ENCODE measurements at regions of chr15 and their contacts with region 1.

Region 1: DNA sequence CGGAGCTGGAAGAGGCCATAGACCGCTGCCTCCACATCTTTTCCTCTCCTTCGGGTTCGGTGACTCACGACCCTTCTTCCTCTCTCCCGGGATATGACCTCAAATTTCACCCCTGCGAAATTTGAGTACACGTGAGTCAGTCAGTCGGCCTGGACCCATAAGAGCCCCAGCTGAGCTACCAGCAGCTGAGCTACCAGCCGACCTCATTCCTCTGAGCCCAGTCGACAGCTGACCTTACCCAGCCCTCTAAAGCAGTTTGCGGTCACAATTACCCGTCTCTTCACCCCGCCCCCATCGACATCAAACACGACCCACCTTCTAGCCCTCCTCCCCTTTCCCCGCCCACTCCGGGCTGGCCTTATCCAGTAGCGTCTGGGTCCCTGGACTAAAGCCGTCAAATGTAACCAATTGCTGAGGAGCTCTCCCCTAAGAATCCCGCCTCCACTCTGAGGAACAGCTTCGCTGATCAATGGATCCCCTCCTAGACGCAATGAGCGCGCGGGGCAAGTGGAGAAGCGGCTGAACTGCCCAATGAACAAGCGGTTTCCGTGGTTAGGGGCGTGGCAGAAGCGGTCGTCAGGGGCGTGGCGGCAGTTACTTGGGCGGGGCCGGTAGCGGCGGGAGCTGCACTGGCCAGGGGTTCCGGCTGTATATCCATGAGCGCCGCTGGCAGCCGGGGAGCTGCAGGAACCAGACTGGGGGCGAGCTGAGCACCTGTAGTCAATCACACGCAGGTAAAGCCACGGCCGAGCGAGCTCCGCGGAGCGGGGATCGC is at the start of gene ABHD2:
- DNase-seq: peak; percentile 98 to 99
- ATAC-seq: peak; percentile 89 to 98 (median 94)
- H3K4me3 ChIP-seq: peak within 1 kb of the TSS; percentile 98
- H3K4me3 Mint-ChIP-seq: no peak within 1 kb of the TSS
- H3K27ac ChIP-seq: peak within 1 kb of the TSS; percentile 82
- H3K27ac Mint-ChIP-seq: no peak within 1 kb of the TSS
- H3K4me1 ChIP-seq: peaks cover 39% of the 10 kb centered on the region
- H3K4me1 Mint-ChIP-seq: peaks cover 38 to 39% of the 10 kb centered on the region in 2 donors
- H3K27me3 ChIP-seq: no peaks in the 10 kb centered on the region
- H3K27me3 Mint-ChIP-seq: no peaks in the 10 kb centered on the region
- CTCF ChIP-seq: no peak
- total RNA-seq, gene ABHD2: 187 to 236 (median 191) TPM

Region 2: DNA sequence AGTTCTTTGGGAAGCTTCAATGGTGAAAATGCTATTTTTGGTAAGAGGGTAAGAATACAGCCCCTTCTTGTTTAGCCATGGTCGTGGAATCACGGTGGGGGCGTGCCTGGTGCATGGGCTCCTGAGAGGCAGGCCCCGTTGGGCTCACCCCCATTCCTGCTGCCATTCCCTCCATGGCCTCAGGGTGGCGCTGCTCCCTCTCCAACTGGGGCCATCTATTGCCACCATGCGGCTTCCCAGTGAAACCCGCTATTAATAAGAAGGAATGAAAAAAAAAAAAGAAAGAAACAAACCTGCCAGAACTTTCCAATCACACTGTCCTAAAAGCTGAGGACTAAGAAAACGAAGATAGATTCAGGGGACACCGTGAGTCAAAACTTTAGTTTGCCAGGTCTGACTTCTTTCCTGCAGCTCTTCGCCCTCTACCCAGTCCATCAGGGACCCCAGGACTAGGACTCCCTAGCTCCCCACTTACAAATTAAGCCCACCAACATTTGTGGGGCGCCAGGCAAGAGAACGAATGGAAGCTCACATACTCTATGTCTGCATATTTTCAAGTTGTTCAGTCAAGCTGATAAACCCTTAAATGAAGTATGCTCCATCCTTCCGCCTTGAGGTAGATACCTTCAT is 30.4 kb before region 1 on chr15:
- intact Hi-C with region 1: no loop called
- DNase-seq: peak; percentile 89
- ATAC-seq: peak; percentile 95 to 100 (median 100)
- H3K4me3 ChIP-seq: no peak overlapping the region
- H3K4me3 Mint-ChIP-seq: no peak overlapping the region
- H3K27ac ChIP-seq: no peak overlapping the region
- H3K27ac Mint-ChIP-seq: no peak overlapping the region
- H3K4me1 ChIP-seq: peaks cover 9% of the 10 kb centered on the region
- H3K4me1 Mint-ChIP-seq: peaks cover 8 to 10% of the 10 kb centered on the region in 2 donors
- H3K27me3 ChIP-seq: no peaks in the 10 kb centered on the region
- H3K27me3 Mint-ChIP-seq: no peaks in the 10 kb centered on the region
- CTCF ChIP-seq: peak; percentile 99

Region 3: GRCh38 chr15:89112341-89112971 is 24.4 kb after region 1 on chr15:
- intact Hi-C with region 1: loop called (anchors 2 kb)
- DNase-seq: peak in 1 of 2 donors; percentile 20
- ATAC-seq: peak; percentile 70 to 83 (median 75)
- H3K4me3 ChIP-seq: no peak overlapping the region
- H3K4me3 Mint-ChIP-seq: peak overlapping the region; percentile 29
- H3K27ac ChIP-seq: peak overlapping the region; percentile 32
- H3K27ac Mint-ChIP-seq: peak overlapping the region; percentile 81 to 85
- H3K4me1 ChIP-seq: peaks cover 31% of the 10 kb centered on the region
- H3K4me1 Mint-ChIP-seq: peaks cover 66 to 68% of the 10 kb centered on the region in 2 donors
- H3K27me3 ChIP-seq: no peaks in the 10 kb centered on the region
- H3K27me3 Mint-ChIP-seq: no peaks in the 10 kb centered on the region
- CTCF ChIP-seq: no peak

Region 4: GRCh38 chr15:89143503-89144162 is 55.6 kb after region 1 on chr15:
- intact Hi-C with region 1: loop called (anchors 2 kb)
- DNase-seq: peak in 1 of 2 donors; percentile 50
- ATAC-seq: peak; percentile 78 to 88 (median 84)
- H3K4me3 ChIP-seq: no peak overlapping the region
- H3K4me3 Mint-ChIP-seq: peak overlapping the region; percentile 58
- H3K27ac ChIP-seq: peak overlapping the region; percentile 48
- H3K27ac Mint-ChIP-seq: peak overlapping the region in 1 of 2 donors; percentile 95
- H3K4me1 ChIP-seq: peaks cover 55% of the 10 kb centered on the region
- H3K4me1 Mint-ChIP-seq: peaks cover 67 to 70% of the 10 kb centered on the region in 2 donors
- H3K27me3 ChIP-seq: no peaks in the 10 kb centered on the region
- H3K27me3 Mint-ChIP-seq: no peaks in the 10 kb centered on the region
- CTCF ChIP-seq: no peak

Region 5: GRCh38 chr15:89299896-89300295 is 211.9 kb after region 1 on chr15:
- intact Hi-C with region 1: no loop called
- DNase-seq: no peak
- ATAC-seq: no peak
- H3K4me3 ChIP-seq: no peak overlapping the region
- H3K4me3 Mint-ChIP-seq: no peak overlapping the region
- H3K27ac ChIP-seq: no peak overlapping the region
- H3K27ac Mint-ChIP-seq: peak overlapping the region; percentile 22 to 70
- H3K4me1 ChIP-seq: peaks cover 5% of the 10 kb centered on the region
- H3K4me1 Mint-ChIP-seq: peaks cover 24 to 26% of the 10 kb centered on the region in 2 donors
- H3K27me3 ChIP-seq: no peaks in the 10 kb centered on the region
- H3K27me3 Mint-ChIP-seq: no peaks in the 10 kb centered on the region
- CTCF ChIP-seq: no peak